ENCODE measurements at regions of chr1 and their contacts with region 1.

Region 1: DNA sequence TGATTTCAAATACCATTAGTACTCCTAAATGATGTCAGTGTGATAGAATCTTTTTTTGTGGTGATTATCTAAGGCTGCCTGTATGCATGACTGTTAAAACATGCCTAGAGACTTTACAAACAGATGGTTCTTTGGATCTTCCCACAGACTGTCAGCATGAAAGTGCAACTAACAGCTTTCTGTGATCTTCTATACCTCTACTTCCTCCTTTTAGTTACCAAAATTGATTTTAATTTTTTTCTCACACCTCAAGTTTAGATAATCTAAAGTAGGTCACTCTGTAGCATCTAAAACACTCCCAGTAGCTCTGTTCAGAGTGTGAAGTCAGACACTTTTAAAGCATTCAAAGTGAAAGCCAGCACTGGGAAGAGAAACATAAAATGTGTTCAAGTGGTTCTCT is 534.5 kb downstream of the PTPRC start:
- DNase-seq: peak; percentile 79
- H3K4me3 Mint-ChIP-seq: peak overlapping the region; percentile 16
- H3K27ac Mint-ChIP-seq: peak overlapping the region; percentile 60
- H3K4me1 Mint-ChIP-seq: peaks cover 44% of the 10 kb centered on the region
- H3K27me3 Mint-ChIP-seq: peaks cover 7% of the 10 kb centered on the region

Region 2: GRCh38 chr1:198880818-198881597 is 292.3 kb before region 1 on chr1:
- intact Hi-C with region 1: loop called (anchors 2 kb)
- DNase-seq: no peak
- H3K4me3 Mint-ChIP-seq: peak overlapping the region; percentile 23
- H3K27ac Mint-ChIP-seq: peak overlapping the region; percentile 86
- H3K4me1 Mint-ChIP-seq: peaks cover 34% of the 10 kb centered on the region
- H3K27me3 Mint-ChIP-seq: no peaks in the 10 kb centered on the region

Region 3: DNA sequence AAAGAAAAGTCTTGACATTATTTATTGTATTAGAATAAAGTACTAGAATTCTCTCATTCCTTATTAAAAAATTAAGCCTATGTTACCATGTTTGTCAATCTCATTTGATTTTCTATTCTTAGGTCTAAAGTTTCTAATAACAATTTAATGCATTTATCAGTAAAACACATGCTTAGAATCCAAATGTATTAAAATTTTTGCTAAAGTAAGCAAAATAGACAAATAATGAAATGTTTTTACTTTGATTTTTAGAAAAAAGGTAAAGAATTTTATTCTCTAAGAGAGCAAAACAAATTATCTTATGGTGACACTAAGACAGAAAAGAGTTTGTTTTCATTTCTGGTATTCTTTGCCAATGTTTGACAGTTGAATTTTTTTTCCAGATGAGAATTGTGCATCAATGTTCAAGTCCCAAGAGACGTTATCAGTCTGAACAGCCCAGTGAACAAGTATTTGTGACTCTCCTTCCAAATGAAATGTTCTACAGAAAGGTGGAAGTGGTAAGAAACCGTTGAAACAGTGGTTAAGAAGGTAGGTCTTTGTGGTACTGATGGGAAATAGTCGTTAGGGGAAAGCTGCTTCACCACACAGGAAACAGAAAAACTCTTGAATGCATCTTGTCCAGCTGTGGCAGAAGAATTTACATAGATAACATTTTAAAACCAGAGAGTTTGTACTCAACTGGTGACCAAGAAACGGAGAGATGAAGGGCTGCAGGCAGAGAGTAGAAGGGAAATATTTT is 132.0 kb before region 1 on chr1:
- intact Hi-C with region 1: loop called (anchors 2 kb)
- DNase-seq: peak; percentile 88
- H3K4me3 Mint-ChIP-seq: peak overlapping the region; percentile 59
- H3K27ac Mint-ChIP-seq: peak overlapping the region; percentile 87
- H3K4me1 Mint-ChIP-seq: peaks cover 37% of the 10 kb centered on the region
- H3K27me3 Mint-ChIP-seq: no peaks in the 10 kb centered on the region

Region 4: GRCh38 chr1:199123615-199124014 is 49.7 kb before region 1 on chr1:
- intact Hi-C with region 1: loop called (anchors 5 kb)
- DNase-seq: no peak
- H3K4me3 Mint-ChIP-seq: no peak overlapping the region
- H3K27ac Mint-ChIP-seq: no peak overlapping the region
- H3K4me1 Mint-ChIP-seq: peaks cover 11% of the 10 kb centered on the region
- H3K27me3 Mint-ChIP-seq: peaks cover 10% of the 10 kb centered on the region

Region 5: GRCh38 chr1:199243423-199244061 is 70.2 kb after region 1 on chr1:
- intact Hi-C with region 1: loop called (anchors 5 kb)
- DNase-seq: peak; percentile 93
- H3K4me3 Mint-ChIP-seq: no peak overlapping the region
- H3K27ac Mint-ChIP-seq: no peak overlapping the region
- H3K4me1 Mint-ChIP-seq: peaks cover 19% of the 10 kb centered on the region
- H3K27me3 Mint-ChIP-seq: peaks cover 24% of the 10 kb centered on the region